GM13976 (cell line): ENCODE measurements at regions of chr11 and their contacts with region 1.

Region 1: GRCh38 chr11:72478659-72479058 is 44.3 kb upstream of the CLPB start:
- DNase-seq: no peak
- CTCF ChIP-seq: no peak

Region 2: DNA sequence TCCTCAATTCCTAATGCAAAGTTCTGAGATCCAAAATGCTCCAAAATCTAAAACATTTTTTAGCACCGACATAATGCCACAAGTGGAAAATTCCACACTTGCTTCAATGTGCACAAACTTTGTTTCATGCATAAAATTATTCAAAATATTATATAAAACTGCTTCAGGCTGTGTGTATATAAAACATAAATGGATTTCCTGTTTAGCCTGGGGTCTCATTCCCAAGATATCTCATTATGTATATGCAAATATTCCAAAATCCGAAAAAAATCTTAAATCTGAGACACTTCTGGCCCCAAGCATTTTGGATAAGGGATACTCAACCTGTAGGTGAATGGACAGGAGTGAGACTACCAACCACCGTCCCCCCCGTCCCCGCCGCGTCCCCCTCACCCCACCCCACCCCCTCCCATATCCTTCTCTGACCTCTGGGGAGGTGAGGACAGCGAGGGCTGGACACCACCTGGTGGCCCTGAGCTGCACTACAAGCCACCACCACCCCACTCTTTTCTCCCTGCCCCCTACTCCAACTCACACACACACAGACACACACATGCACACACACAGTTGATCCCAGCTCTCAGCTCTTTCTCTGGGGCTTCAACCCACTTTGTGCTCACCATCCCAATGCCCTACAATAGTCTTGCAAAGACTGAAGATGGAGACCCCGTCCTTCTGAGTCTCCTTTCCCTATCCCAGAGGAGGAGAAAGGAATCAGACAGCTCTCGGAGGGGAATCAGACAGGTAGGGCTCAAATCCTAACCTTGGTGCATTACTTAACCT is 94.6 kb after region 1 on chr11:
- in situ Hi-C with region 1: loop called (anchors 5 kb)
- DNase-seq: peak; percentile 74
- CTCF ChIP-seq: peak; percentile 60